MCF 10A (cell line): ENCODE measurements at regions of chr7 and their contacts with region 1.

Region 1: DNA sequence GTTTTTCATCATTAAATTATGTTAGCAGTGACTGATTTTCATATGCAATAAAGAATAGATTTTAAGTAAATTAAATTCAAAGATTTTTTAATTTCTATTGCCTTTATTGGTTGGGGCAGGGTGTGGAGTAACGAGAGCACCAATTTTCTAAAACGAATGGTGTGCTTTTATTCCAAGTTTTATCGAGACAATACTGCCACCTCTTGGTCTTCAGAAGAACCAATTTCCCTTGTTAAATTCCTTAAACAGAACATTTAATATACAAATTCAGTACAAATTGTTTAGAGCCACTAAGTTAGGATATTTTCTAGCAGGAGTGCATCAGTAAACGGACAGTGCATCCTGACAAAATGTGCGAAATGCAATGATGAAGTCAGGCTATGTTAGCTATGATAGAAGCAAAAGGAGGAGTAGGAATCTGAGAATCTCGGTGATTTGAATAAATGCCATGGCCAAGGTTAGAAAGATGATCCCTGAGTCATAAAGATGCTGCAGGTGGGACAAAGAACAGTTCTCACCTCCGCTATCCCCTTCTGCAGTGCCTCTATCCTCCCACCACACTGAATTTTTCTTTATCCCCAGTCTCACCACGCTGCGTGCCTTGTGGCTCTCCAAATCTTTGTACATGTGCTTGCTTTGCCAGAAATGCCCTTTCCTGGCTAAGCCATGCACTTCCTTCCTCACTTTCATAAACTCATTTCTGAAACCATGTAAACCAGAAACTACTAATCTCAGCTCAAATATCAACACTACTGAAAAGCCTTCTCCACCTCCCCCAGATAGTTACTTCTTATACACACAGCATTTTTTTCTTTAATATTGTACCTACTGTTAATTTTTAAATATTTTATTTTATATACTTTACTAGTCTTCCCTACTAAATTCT is 31.9 kb upstream of the AGBL3 start:
- DNase-seq: peak; percentile 46
- H3K4me3 Mint-ChIP-seq: no peak overlapping the region
- H3K27ac Mint-ChIP-seq: peak overlapping the region; percentile 43
- H3K4me1 Mint-ChIP-seq: no peaks in the 10 kb centered on the region
- H3K27me3 Mint-ChIP-seq: no peaks in the 10 kb centered on the region
- CTCF ChIP-seq: peak; percentile 58

Region 2: GRCh38 chr7:135074085-135074484 is 119.6 kb after region 1 on chr7:
- CTCF ChIA-PET with region 1: no interaction called
- POLR2A ChIA-PET with region 1: no interaction called
- intact Hi-C with region 1: no loop called
- DNase-seq: no peak
- H3K4me3 Mint-ChIP-seq: no peak overlapping the region
- H3K27ac Mint-ChIP-seq: no peak overlapping the region
- H3K4me1 Mint-ChIP-seq: no peaks in the 10 kb centered on the region
- H3K27me3 Mint-ChIP-seq: peaks cover 48% of the 10 kb centered on the region
- CTCF ChIP-seq: no peak

Region 3: DNA sequence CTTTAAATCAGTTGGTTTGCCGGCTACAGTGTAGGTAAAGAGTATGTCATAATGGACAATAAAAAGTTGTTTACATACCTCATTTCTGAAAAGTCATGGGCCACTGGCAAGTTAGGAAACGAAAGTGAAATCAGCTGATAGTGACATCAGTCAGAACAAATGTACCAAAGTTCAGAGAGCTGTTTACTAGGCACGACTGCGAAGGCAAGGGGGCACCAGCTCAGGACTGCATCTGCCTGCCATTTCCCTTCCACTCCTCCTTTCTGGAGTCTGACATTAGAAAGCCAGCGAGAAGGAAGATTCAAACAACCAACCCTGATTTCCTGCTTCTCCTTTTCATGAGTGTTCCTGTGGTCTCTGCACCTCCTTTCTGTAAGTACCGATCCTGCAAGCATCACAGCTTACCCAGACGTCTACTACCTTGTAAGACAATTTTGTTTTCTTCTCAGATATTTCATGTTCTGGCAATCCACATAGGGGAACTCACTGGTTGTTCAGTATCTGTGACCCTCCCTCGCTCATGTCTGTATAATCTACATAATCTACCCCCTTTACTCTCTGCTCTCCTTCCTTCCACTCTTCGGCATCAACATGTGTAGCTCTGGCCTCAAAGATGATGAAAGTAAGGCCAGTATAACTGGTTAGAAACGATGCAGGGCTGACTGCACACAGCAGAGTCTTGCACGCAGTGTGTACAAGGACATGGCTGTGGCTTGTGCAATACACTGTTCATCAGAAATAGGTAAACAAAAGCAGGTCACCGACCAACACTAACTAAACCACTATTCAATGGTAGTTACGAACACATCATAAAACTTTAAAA is 193.7 kb after region 1 on chr7 and contains the start of gene TMEM140:
- CTCF ChIA-PET with region 1: no interaction called
- POLR2A ChIA-PET with region 1: no interaction called
- intact Hi-C with region 1: no loop called
- DNase-seq: peak; percentile 33
- H3K4me3 Mint-ChIP-seq: peak within 1 kb of the TSS; percentile 39
- H3K27ac Mint-ChIP-seq: peak within 1 kb of the TSS; percentile 46
- H3K4me1 Mint-ChIP-seq: peaks cover 7% of the 10 kb centered on the region
- H3K27me3 Mint-ChIP-seq: no peaks in the 10 kb centered on the region
- CTCF ChIP-seq: no peak
- total RNA-seq, gene TMEM140: not detected in 2 replicates

Region 4: GRCh38 chr7:135170274-135170997 is 216.0 kb after region 1 on chr7 and contains the start of gene CYREN:
- CTCF ChIA-PET with region 1: interaction called, 3 read pairs
- POLR2A ChIA-PET with region 1: interaction called, 5 read pairs
- intact Hi-C with region 1: loop called (anchors 5 kb)
- DNase-seq: peak; percentile 95
- H3K4me3 Mint-ChIP-seq: peak within 1 kb of the TSS; percentile 79
- H3K27ac Mint-ChIP-seq: peak within 1 kb of the TSS; percentile 88
- H3K4me1 Mint-ChIP-seq: peaks cover 34% of the 10 kb centered on the region
- H3K27me3 Mint-ChIP-seq: no peaks in the 10 kb centered on the region
- CTCF ChIP-seq: peak; percentile 44
- total RNA-seq, gene CYREN: 66.0 and 71.0 TPM in 2 replicates